ENCODE measurements at regions of chr4 and their contacts with region 1.

Region 1: GRCh38 chr4:54296548-54297203 is 67.6 kb downstream of the PDGFRA start:
- DNase-seq: no peak
- ATAC-seq: peak in 3 of 4 donors; percentile 68 to 79 (median 69)
- H3K4me3 ChIP-seq: no peak overlapping the region
- H3K27ac ChIP-seq: peak overlapping the region in 4 of 12 donors; percentile 4 to 51 (median 30)
- H3K4me1 ChIP-seq: peaks cover 0 to 25% (median 12%) of the 10 kb centered on the region in 12 donors
- H3K27me3 ChIP-seq: no peaks in the 10 kb centered on the region
- CTCF ChIP-seq: no peak
- POLR2A ChIP-seq: no peak

Region 2: GRCh38 chr4:54268151-54268550 is 28.5 kb before region 1 on chr4:
- intact Hi-C with region 1: no loop called
- DNase-seq: no peak
- ATAC-seq: no peak
- H3K4me3 ChIP-seq: no peak overlapping the region
- H3K27ac ChIP-seq: no peak overlapping the region
- H3K4me1 ChIP-seq: no peaks in the 10 kb centered on the region
- H3K27me3 ChIP-seq: no peaks in the 10 kb centered on the region
- CTCF ChIP-seq: no peak
- POLR2A ChIP-seq: no peak

Region 3: GRCh38 chr4:54282837-54283236 is 13.8 kb before region 1 on chr4:
- intact Hi-C with region 1: loop called in 1 of 10 experiments (anchors 2 kb)
- DNase-seq: no peak
- ATAC-seq: no peak
- H3K4me3 ChIP-seq: no peak overlapping the region
- H3K27ac ChIP-seq: no peak overlapping the region
- H3K4me1 ChIP-seq: peaks cover 0 to 31% (median 21%) of the 10 kb centered on the region in 12 donors
- H3K27me3 ChIP-seq: no peaks in the 10 kb centered on the region
- CTCF ChIP-seq: no peak
- POLR2A ChIP-seq: no peak